Activated T-helper 1 cell treated with anti-CD3 and anti-CD28 coated beads, Interleukin-12 subunit alpha, Interleukin-12 subunit beta, Interleukin-2, Interleukin-4 antibody, amounts not matched to agents 30 ng/mL and 10 ng/mL and 1 ng/mL, durations not matched to agents 14 hours and 24 hours and 36 hours (primary cell): ENCODE measurements at regions of chr15 and their contacts with region 1.

Region 1: DNA sequence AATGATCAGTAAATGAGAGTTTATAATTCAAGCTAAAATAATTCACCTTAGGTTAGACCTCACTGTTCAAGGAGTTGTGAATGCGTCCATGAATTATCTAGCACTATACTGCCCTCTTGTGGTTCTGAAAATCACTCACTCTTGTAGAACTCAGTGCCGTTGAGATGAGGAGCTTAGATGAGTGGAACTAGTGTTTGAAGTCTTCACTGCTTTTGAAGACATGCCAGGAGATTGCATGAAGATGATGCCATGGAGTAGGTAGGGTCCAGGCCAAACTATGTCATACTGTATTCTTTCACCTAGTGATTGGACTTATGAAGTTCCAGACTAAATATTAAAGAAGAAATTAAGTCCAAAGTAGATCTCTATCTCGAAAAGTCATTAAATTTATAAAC is 28.8 kb downstream of the LYSMD4 start:
- DNase-seq: peak; percentile 40
- H3K4me3 Mint-ChIP-seq: no peak overlapping the region
- H3K27ac Mint-ChIP-seq: no peak overlapping the region
- H3K4me1 Mint-ChIP-seq: peaks cover 58% of the 10 kb centered on the region
- H3K27me3 Mint-ChIP-seq: no peaks in the 10 kb centered on the region

Region 2: DNA sequence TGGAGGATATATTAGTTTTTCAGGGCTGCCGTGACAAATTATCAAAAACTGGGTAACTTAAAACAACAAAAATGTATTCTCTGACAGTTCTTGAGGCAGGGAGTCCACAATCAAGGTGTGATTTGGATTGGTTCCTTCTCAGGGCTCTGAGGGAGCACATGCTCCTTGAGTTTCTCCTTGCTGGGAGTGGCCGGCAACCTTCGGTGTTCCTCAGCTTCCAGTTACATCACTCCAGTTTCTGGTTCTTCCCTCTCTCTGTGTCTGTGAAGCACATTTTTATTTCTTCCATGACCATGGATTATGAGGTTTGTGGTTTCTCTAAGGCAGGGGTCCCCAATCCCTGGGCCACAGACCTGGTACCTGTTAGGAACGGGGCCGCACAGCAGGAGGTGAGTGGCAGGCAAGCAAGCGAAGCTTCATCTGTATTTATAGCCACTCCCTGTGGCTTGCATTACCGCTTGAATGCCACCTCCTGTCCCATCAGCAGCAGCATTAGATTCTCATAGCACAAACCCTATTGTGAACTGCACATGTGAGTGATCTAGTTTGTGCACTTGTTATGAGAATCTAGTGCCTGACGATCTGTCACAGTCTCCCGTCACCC is 428.8 kb before region 1 on chr15:
- intact Hi-C with region 1: loop called (anchors 1 kb)
- DNase-seq: no peak
- H3K4me3 Mint-ChIP-seq: no peak overlapping the region
- H3K27ac Mint-ChIP-seq: no peak overlapping the region
- H3K4me1 Mint-ChIP-seq: peaks cover 34% of the 10 kb centered on the region
- H3K27me3 Mint-ChIP-seq: no peaks in the 10 kb centered on the region

Region 3: DNA sequence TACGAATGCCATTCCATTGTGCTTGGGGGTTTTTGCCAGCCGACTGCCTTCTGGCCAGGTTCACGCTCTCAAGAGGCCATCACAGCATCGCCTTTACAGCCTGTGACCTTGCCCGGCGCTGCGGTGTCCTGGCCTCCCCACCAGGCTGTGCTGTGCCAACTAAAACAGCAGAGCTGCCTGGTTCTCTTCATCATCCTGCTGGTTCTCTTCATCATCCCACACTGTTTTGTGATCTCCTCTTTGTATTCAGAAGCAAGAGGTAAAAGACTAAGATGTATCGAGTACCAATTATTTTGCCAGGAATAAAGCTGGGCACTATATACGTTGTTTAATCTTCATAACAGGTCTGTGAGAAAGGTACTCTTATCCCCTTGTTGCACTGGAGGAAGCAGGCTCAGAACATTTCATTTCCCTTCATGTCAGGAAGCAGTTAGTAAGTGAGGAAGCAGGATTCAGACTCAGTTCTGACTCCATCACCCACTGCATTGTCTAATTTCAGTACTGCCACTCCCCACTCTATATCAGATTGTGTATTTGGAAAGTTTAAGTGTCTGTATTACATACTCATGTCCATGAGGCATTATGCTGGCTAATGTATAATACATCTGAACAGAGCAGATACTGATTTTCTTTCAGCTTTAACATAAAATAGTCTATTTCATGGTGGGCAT is 360.4 kb before region 1 on chr15:
- intact Hi-C with region 1: loop called (anchors 2 kb)
- DNase-seq: peak; percentile 4
- H3K4me3 Mint-ChIP-seq: no peak overlapping the region
- H3K27ac Mint-ChIP-seq: no peak overlapping the region
- H3K4me1 Mint-ChIP-seq: peaks cover 12% of the 10 kb centered on the region
- H3K27me3 Mint-ChIP-seq: no peaks in the 10 kb centered on the region

Region 4: GRCh38 chr15:99424978-99425656 is 279.3 kb before region 1 on chr15:
- intact Hi-C with region 1: loop called (anchors 2 kb)
- DNase-seq: peak; percentile 49
- H3K4me3 Mint-ChIP-seq: peak overlapping the region; percentile 68
- H3K27ac Mint-ChIP-seq: peak overlapping the region; percentile 92
- H3K4me1 Mint-ChIP-seq: peaks cover 63% of the 10 kb centered on the region
- H3K27me3 Mint-ChIP-seq: no peaks in the 10 kb centered on the region

Region 5: GRCh38 chr15:99486371-99487336 is 217.8 kb before region 1 on chr15:
- intact Hi-C with region 1: no loop called
- DNase-seq: no peak
- H3K4me3 Mint-ChIP-seq: no peak overlapping the region
- H3K27ac Mint-ChIP-seq: no peak overlapping the region
- H3K4me1 Mint-ChIP-seq: peaks cover 21% of the 10 kb centered on the region
- H3K27me3 Mint-ChIP-seq: peaks cover 4% of the 10 kb centered on the region

Region 6: GRCh38 chr15:99565299-99566156 is 138.9 kb before region 1 on chr15 and contains the start of gene MEF2A:
- intact Hi-C with region 1: loop called (anchors 1 kb)
- DNase-seq: peak; percentile 89
- H3K4me3 Mint-ChIP-seq: peak within 1 kb of the TSS; percentile 98
- H3K27ac Mint-ChIP-seq: peak within 1 kb of the TSS; percentile 95
- H3K4me1 Mint-ChIP-seq: peaks cover 36% of the 10 kb centered on the region
- H3K27me3 Mint-ChIP-seq: peaks cover 4% of the 10 kb centered on the region
- total RNA-seq, gene MEF2A: 27.4 and 30.2 TPM in 2 replicates

Region 7: GRCh38 chr15:99719096-99719541 is 14.7 kb after region 1 on chr15:
- intact Hi-C with region 1: loop called (anchors 1 kb)
- DNase-seq: no peak
- H3K4me3 Mint-ChIP-seq: no peak overlapping the region
- H3K27ac Mint-ChIP-seq: no peak overlapping the region
- H3K4me1 Mint-ChIP-seq: peaks cover 33% of the 10 kb centered on the region
- H3K27me3 Mint-ChIP-seq: no peaks in the 10 kb centered on the region

Region 8: DNA sequence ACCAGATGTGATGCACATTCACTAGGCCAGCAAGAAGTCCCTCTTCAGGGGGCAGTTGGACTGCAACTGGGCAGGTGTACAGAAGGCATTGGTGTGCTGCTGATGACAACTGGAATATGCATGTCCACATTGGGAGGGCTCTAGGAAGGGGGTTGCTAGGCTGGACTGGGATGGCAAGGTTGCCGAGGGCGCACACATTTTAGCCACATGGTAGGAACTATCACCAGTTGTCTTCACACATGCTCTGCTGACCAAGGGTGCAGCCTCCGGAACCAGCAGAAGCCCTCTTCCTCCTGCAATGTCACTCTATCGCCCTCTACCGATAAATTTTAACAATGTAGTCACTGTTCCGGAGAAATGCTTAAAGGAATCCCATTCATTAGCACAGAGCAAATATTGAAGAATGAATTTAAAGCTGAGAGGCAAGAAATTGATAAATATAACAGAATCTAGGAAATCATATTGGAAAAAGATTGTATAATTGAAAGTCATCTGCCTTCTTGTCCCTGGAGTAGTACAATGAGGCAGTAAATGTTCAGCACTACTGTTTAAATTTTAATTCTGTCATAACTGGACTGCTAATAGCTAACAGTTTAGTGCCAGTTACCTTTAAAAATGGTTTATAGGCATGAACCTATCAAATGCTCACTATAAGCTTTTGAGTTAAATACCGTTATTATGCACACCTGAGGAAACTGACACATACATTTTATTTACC is 51.4 kb after region 1 on chr15:
- intact Hi-C with region 1: loop called (anchors 1 kb)
- DNase-seq: peak; percentile 31
- H3K4me3 Mint-ChIP-seq: no peak overlapping the region
- H3K27ac Mint-ChIP-seq: no peak overlapping the region
- H3K4me1 Mint-ChIP-seq: peaks cover 8% of the 10 kb centered on the region
- H3K27me3 Mint-ChIP-seq: peaks cover 14% of the 10 kb centered on the region